Activated CD4-positive, alpha-beta memory T cell treated with anti-CD3 and anti-CD28 coated beads for 36 hours (primary cell): ENCODE measurements at regions of chr10 and their contacts with region 1.

Region 1: GRCh38 chr10:83886871-83887270 is 252.4 kb upstream of the GHITM start:
- DNase-seq: no peak
- H3K4me3 Mint-ChIP-seq: no peak overlapping the region
- H3K27ac Mint-ChIP-seq: no peak overlapping the region
- H3K4me1 Mint-ChIP-seq: no peaks in the 10 kb centered on the region
- H3K27me3 Mint-ChIP-seq: peaks cover 5% of the 10 kb centered on the region

Region 2: GRCh38 chr10:83871187-83872081 is 15.4 kb before region 1 on chr10:
- CTCF ChIA-PET with region 1: interaction called, 16 read pairs
- POLR2A ChIA-PET with region 1: no interaction called
- intact Hi-C with region 1: no loop called
- DNase-seq: peak; percentile 73
- H3K4me3 Mint-ChIP-seq: no peak overlapping the region
- H3K27ac Mint-ChIP-seq: no peak overlapping the region
- H3K4me1 Mint-ChIP-seq: no peaks in the 10 kb centered on the region
- H3K27me3 Mint-ChIP-seq: no peaks in the 10 kb centered on the region